Posterior vena cava (tissue), 2 donors: ENCODE measurements at regions of chr1 and their contacts with region 1.

Region 1: DNA sequence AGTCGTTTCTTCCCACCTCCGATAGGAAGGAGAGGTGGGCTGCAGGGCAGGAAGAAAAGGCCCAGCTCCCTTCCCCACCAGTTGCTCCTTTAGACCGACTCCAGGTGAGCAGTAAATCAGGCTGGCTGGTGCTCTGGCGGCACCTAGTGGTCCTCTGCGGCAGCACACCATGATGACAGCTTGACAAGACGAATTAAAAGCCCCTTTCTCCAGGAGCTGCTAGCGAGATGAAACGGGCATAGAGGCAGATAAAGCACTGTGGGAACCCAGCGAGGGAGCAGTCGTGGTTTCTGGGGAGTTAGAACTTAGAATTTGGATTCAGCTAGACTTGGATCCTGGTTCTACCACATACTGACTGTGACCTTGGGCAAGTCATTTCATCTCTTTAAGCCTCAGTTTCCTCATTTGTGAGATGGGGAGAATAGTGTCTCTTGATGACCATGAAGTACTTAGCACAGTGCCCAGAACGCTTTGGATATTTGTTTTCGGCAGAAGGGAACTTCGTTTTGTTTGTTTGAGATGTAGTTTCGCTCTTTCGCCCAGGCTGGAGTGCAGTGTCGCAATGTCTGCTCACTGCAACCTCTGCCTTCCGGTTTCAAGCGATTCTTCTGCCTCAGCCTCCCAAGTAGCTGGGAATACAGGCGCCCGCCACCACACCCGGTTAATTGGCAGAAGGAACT is 21.8 kb upstream of the COL9A2 start:
- DNase-seq: peak; percentile 92

Region 2: GRCh38 chr1:40143891-40144575 is 194.9 kb before region 1 on chr1:
- intact Hi-C with region 1: loop called in 1 of 2 experiments (anchors 10 kb)
- DNase-seq: no peak

Region 3: GRCh38 chr1:40153073-40153770 is 185.7 kb before region 1 on chr1:
- intact Hi-C with region 1: loop called (anchors 2 to 10 kb)
- DNase-seq: no peak